ENCODE measurements at regions of chr11 and their contacts with region 1.

Region 1: DNA sequence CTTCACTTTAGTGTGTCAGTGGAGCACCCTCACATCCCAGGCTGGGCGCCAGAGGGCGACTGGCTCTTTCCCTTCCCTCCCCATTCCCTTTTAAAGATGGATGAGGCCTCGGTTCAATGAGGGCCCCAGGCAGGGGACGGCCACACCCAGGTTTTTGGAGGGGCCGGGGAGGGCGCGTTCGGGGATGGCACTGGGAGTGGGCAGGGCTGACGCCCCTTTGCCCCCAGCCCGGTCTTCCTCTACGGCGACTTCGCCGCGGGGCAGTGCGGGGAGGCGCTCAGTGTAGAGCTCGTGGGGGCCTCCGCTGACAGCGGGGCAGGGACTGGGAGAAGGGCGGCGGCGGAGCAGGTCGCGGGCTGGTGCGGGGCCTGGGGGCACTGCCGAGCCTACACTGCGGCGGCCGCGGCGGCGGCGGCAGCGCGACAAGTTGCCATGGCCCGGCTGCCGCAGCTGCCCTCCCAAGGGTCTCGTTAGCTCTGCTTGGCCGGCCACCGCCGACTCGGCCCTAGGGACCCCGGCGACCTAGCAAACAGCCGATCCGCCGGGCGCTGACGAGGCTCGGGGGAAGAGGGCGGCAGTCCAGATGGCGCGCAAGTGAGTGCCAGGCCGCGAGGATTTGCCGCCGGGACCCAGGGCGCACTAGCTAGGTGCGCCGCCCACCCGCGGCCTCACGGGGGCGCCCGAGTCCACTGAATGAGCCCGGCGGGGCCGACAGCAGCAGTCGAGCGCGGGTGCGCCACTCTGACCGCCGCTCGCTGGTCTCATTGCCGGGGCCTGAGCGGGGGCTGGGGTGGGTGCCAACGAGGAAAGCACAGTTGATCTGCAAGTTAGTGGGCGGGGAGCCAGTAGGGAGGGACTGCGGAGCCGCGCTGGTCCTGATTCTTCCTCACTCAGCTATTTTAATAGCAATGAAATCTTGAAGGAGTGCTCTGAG is 92.7 kb downstream of the RRM1 start:
- DNase-seq: peak; percentile 87
- H3K4me3 Mint-ChIP-seq: peak overlapping the region; percentile 77
- H3K27ac Mint-ChIP-seq: no peak overlapping the region
- H3K4me1 Mint-ChIP-seq: peaks cover 26% of the 10 kb centered on the region
- H3K27me3 Mint-ChIP-seq: peaks cover 19% of the 10 kb centered on the region

Region 2: DNA sequence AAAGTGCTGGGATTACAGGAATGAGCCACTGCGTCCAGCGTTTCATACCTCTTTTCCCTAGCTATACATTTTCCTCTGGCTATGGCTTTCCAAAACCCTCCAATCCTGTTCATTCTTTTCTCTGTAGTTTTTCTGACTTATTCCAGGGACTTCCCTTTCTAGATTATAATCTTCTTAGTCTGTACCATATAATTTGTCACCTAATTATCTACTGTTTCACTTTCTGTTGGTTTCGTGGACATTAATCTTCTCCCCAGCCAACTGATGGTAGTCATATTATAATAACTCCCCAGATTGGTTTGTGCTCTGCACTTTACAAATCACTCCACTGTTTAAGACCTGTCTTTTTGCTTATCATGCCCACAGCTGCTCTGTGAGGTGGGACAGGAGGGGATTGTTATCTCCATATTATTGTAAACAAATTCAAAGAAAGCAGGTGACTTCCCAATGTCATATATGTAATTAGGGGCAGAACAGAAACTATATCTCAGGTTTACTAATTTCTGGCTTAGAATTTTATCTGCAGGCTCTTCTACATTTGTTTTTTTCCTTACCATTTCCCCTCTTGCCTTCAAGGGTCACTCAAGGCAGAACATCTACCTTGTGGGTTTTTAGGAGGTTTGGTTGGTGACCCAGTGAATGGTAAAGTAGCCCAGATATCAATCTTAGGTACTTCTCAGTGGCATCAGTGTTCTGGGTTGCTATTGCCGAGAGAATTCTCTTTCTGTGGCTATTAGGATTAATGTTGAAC is 307.9 kb before region 1 on chr11:
- CTCF ChIA-PET with region 1: no interaction called
- DNase-seq: no peak
- H3K4me3 Mint-ChIP-seq: no peak overlapping the region
- H3K27ac Mint-ChIP-seq: no peak overlapping the region
- H3K4me1 Mint-ChIP-seq: peaks cover 63% of the 10 kb centered on the region
- H3K27me3 Mint-ChIP-seq: no peaks in the 10 kb centered on the region

Region 3: DNA sequence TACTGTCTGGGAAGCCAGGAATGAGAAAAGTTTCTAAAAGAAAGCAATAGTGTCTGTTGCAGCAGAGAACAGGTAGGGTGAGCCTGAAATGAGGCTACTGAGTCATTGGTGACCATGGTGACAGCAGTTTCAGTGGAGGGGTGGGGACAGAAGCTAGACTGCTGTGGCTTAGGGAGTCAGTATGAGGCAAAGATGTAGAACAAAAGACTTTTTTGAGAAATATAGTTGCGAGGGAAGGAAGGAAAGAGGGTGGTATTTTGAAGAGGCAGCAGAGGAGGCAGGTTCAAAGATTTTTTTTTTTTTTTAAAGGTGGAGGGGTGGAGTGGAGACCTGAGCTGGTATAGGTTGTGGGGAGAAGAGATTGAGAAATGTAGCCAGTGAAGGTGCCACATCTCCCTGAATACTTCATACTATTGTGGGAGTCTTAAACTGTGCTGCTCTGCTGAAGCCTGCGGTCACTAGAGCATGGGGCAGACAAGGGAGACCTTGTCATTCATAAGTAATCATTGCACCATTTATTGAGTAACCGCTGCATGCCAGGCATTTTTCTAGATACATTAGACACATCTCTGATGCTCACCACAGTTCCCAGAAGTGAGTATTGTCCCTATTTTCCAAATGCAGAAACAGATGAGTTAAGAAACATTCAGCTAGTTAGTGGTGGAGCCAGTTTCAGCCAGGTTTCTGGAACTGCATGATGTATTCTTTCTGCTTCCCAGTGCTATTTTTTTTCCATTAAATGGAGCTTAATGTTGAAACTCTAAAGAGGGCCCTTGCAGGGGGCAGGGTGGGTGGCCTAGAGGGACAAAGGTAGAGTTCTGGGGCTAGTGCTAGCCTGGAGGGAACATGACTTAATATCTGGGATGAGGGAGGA is 282.0 kb before region 1 on chr11:
- CTCF ChIA-PET with region 1: no interaction called
- DNase-seq: peak; percentile 82
- H3K4me3 Mint-ChIP-seq: no peak overlapping the region
- H3K27ac Mint-ChIP-seq: peak overlapping the region; percentile 65
- H3K4me1 Mint-ChIP-seq: peaks cover 77% of the 10 kb centered on the region
- H3K27me3 Mint-ChIP-seq: no peaks in the 10 kb centered on the region

Region 4: DNA sequence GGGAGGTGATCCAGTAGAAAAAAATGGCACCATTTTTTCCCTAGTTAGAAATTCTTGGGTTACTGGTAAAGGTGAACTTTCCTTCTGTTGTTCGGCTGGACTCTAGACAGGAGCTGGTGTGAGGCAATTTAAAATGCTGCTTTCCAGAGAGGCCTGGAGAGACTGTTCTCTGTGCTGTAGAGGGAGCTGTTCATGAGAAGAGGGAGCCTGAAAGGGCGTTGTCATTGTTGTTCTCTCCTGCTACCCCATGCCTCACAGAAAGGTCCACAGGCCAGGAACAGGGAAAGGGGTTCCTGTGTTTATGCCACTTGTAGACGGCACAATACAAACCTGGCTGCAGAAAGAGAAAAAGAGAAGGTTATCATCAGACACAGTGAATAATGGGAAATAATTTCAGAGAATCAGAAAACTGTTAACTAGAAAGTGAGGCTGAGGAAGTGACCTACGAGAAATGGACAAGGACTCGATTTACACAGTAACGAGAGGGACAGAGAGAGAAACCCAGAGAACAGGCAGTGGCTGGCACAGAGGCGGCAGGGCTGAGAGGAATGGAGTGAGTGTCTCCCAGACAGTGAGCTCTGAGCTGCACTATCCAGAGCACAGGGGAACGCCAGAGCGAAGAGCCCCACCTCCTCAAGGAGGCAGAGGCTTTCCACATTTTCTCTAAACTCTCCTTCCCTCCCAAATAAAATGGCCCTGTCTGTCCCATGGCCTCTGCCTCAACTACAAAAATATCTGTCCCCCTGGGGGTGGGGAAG is 16.5 kb after region 1 on chr11:
- CTCF ChIA-PET with region 1: interaction called, 14 read pairs
- DNase-seq: no peak
- H3K4me3 Mint-ChIP-seq: no peak overlapping the region
- H3K27ac Mint-ChIP-seq: no peak overlapping the region
- H3K4me1 Mint-ChIP-seq: no peaks in the 10 kb centered on the region
- H3K27me3 Mint-ChIP-seq: peaks cover 8% of the 10 kb centered on the region

Region 5: GRCh38 chr11:4496557-4497275 is 309.4 kb after region 1 on chr11:
- CTCF ChIA-PET with region 1: interaction called, 107 read pairs
- DNase-seq: no peak
- H3K4me3 Mint-ChIP-seq: no peak overlapping the region
- H3K27ac Mint-ChIP-seq: no peak overlapping the region
- H3K4me1 Mint-ChIP-seq: peaks cover 4% of the 10 kb centered on the region
- H3K27me3 Mint-ChIP-seq: peaks cover 3% of the 10 kb centered on the region

Region 6: GRCh38 chr11:4539603-4540219 is 352.4 kb after region 1 on chr11:
- CTCF ChIA-PET with region 1: interaction called, 124 read pairs
- DNase-seq: peak; percentile 64
- H3K4me3 Mint-ChIP-seq: no peak overlapping the region
- H3K27ac Mint-ChIP-seq: no peak overlapping the region
- H3K4me1 Mint-ChIP-seq: no peaks in the 10 kb centered on the region
- H3K27me3 Mint-ChIP-seq: no peaks in the 10 kb centered on the region

Region 7: GRCh38 chr11:4636962-4637661 is 449.8 kb after region 1 on chr11 and contains the start of gene OR51D1:
- CTCF ChIA-PET with region 1: interaction called, 12 read pairs
- DNase-seq: peak; percentile 76
- H3K4me3 Mint-ChIP-seq: no peak within 1 kb of the TSS
- H3K27ac Mint-ChIP-seq: no peak within 1 kb of the TSS
- H3K4me1 Mint-ChIP-seq: no peaks in the 10 kb centered on the region
- H3K27me3 Mint-ChIP-seq: no peaks in the 10 kb centered on the region

Measured in activated naive CD4-positive, alpha-beta T cell treated with anti-CD3 and anti-CD28 coated beads, Interleukin-2, amount 10 ng/mL, durations not matched to agents 7 days and 5 days (primary cell).